ENCODE measurements at regions of chr13 and their contacts with region 1.

Region 1: DNA sequence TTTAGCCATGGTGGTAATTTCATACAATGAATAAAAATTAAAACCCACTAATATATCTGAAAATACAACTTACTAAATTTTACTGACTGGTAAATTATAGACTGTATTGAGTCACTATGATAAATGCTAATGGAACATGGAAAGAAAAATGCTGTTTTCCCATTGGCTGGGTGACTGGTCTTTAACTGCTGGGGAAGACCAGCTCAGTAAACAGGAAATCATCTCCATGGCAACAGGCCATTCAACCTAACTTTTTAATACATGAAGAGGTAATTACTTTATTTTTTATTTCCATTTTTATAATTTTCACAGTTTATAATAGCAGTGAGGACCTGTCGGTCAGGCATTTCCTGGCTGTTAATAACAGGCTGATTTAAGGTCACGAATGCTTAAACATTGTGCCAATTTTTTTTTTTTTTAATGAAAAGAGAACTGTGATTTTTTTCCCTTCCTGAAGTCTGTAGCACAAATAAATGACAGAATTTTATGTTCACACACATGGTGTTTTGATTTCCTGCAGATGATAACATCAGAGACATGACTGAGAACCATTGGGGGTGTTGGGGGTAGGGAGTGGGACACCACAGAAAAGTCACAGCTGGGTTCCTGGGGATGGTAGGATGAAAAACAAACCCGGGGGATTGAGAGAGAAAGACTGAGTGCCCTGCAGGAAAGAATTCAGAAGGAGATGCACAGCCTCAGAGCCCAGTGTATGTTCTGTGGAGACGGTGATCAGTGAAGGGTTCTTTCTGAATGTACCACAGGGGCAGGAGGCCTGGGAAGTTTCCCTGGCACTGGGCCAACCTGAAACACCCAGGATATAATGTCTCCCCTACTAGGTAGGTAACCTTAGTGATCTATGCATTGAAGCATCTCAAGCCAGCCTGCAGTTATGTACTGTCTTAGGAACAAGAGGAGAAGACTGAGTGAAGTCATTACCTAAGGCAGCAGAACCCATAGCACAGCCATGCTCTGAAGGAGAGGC is 297.1 kb downstream of the COG6 start:
- DNase-seq: no peak
- H3K4me3 ChIP-seq: no peak overlapping the region
- H3K27ac ChIP-seq: no peak overlapping the region
- H3K4me1 ChIP-seq: no peaks in the 10 kb centered on the region
- H3K27me3 ChIP-seq: no peaks in the 10 kb centered on the region
- CTCF ChIP-seq: no peak
- POLR2A ChIP-seq: no peak

Region 2: DNA sequence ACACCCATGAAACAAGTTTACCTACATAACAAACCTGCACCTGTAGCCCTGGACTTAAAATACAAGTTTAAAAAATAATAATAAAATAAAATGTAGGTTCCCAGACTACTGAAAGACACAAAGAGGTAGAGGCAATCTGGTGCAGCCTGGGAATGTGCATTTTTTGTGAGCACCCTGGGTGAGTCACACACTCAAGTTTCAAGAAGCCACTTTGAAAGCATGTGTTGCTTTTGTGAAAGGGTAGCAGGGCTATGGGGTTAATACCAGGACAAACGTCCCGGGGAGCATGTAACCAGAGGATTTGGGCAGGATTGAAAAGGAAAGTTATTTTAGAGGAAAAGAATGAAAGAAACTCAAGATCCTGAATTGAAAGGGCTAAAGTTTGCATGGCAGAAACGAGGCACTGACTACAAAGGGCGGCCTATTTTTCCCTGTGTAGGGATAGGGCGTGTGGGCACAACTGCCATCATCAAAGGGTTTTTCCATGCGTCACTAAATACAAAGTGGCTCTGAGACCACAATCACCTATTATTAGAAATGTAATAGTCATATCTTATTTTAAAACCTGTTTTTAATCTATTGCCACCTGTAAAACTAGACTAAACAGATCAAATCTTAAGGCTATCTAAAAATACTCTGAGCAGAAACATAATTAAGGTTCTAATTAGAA is 17.8 kb after region 1 on chr13:
- intact Hi-C with region 1: no loop called
- DNase-seq: no peak
- H3K4me3 ChIP-seq: no peak overlapping the region
- H3K27ac ChIP-seq: no peak overlapping the region
- H3K4me1 ChIP-seq: no peaks in the 10 kb centered on the region
- H3K27me3 ChIP-seq: no peaks in the 10 kb centered on the region
- CTCF ChIP-seq: no peak
- POLR2A ChIP-seq: no peak

Region 3: DNA sequence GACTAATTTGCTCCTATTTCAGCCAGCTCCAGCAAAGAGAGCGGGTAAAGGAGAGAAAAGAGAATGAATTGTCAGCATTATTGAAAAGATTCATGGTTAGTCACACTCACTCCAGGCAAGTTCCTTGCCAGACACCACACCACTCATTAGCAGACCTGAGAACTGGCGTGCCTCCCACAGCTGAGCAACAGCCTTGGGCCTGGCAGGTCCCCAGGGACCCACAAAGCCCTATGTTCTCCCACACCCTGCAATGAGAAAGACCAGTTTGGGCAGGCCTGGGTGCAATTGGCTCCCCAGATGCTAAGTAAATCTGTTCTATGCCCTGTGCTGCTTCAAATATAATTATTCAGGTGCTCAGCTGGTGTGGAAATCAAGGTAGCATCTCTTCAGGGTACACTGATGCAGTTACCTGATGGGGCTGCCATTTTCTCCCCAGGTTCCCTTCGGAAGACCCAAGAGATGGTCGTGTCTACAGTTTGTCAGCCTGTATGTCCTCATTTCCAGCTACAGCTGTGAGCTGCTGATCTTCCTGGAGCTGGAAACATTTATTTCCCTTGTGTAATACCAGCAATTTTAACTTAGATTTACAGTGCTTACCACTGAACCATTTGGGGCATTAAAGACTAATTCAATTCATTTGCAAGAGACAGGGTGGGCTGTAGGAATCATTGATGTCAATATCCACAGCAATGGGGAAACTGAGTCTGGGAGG is 107.9 kb after region 1 on chr13:
- intact Hi-C with region 1: loop called (anchors 5 kb)
- DNase-seq: peak in 1 of 2 donors; percentile 89
- H3K4me3 ChIP-seq: no peak overlapping the region
- H3K27ac ChIP-seq: peak overlapping the region; percentile 68 to 72
- H3K4me1 ChIP-seq: peaks cover 0 to 12% of the 10 kb centered on the region in 2 donors
- H3K27me3 ChIP-seq: no peaks in the 10 kb centered on the region
- CTCF ChIP-seq: no peak
- POLR2A ChIP-seq: no peak